ENCODE measurements at regions of chr10 and their contacts with region 1.

Region 1: DNA sequence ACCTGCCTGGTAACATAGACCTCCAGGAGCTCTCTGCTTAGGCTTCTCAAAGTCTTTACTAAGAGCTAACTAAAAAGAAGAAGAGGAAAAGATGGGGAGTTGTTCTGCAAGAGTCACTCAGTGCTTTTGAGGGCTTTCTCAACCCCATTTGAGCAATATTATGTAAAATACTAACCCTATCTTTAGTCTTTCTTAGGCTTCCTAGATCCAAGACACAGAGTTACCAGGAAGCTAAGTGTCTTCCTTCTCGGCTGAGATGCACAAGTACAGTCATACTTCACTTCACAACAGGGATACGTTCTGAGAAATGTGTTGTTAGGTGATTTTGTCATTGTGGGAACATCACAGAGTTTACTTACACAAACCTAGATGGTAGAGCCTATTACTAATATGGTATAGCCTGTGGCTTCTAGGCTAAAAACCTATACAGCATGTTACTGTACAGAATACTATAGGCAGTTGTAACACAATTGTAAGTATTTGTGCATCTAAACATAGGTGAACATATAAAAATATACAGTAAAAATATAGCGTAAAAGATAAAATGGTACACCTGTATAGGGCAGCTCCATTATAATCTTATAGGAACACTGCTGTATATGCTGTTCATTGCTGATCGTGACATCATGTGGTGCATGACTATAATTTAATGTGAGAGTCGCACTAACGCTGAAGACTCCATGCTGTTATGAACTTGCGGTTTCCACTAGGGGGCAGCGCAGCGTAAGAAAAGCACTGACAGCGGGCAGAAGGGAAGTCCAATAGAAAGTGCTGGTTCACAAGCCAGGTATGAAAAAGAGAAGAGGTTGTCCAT is 16.3 kb downstream of the ANKRD22 start:
- DNase-seq: no peak
- H3K4me3 ChIP-seq: no peak overlapping the region
- H3K27ac ChIP-seq: no peak overlapping the region
- H3K4me1 ChIP-seq: no peaks in the 10 kb centered on the region
- H3K27me3 ChIP-seq: no peaks in the 10 kb centered on the region
- CTCF ChIP-seq: peak; percentile 72 to 90 (median 81)
- POLR2A ChIP-seq: no peak

Region 2: GRCh38 chr10:88926566-88927415 is 91.5 kb after region 1 on chr10:
- intact Hi-C with region 1: loop called (anchors 2 kb)
- DNase-seq: no peak
- H3K4me3 ChIP-seq: no peak overlapping the region
- H3K27ac ChIP-seq: peak overlapping the region; percentile 49
- H3K4me1 ChIP-seq: peaks cover 21% of the 10 kb centered on the region
- H3K27me3 ChIP-seq: no peaks in the 10 kb centered on the region
- CTCF ChIP-seq: no peak
- POLR2A ChIP-seq: no peak

Region 3: DNA sequence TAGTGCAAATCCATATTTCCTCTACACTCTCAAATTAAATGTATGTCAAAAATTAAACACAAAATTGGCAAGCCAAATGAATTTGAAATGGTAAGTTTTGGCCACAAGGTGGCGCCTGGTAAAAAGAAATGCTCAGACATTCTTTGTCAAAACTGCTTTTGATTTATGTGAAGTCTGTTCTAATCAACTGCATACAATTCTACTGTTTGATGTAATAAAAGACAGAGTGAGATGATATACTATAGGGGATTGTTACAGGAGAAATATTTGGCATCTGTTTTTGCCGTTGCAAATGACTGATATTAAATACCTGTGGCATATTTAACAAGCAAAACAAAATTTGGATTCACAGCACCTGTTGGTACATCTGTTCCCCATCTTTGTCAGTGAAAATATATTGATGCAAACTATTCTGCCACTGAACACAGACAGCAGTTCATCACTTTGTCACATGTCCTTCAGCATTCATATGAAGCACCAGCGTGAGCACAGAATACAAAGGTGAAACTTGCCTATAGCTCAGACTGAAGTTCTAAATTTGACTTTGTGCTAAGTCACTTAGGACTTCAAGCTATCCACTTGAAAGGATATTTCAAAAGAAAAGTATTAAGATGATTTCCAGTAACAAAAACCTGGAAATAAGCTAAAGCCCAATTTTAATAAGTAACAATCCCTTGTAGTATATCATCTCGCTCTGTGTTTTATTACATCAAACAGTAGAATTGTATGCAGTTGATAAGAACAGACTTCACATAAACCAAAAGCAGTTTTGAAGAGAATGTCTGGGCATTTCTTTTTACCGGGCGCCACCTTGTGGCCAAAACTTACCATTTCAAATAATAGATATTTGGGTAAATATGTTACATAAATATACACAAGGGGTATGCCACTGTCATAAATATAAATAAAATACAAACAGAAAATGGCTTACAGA is 382.0 kb after region 1 on chr10:
- intact Hi-C with region 1: loop called (anchors 10 kb)
- DNase-seq: no peak
- H3K4me3 ChIP-seq: no peak overlapping the region
- H3K27ac ChIP-seq: peak overlapping the region; percentile 30
- H3K4me1 ChIP-seq: peaks cover 28% of the 10 kb centered on the region
- H3K27me3 ChIP-seq: no peaks in the 10 kb centered on the region
- CTCF ChIP-seq: peak; percentile 51 to 79 (median 63)
- POLR2A ChIP-seq: no peak

Measured in vagina (tissue), 2 donors.